ENCODE measurements at regions of chr4 and their contacts with region 1.

Region 1: DNA sequence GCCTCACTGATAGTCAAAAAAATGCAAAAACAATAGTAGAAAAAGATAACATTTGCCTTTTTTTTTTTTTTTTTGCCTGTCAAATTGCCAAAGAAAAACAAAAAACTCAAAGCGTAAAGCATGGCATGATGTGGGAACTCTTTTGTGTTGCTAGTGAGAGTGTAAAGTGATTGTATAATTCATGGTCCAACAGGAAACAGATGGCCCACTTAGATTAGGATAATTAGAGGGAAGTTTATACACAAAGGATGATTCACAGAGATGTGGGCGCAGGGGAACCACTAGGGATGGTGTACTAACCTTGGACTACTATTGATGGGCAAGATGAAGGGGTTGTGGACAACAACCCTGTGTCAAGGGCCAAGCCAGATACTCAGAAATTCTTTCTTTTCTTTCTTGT is 16.4 kb downstream of the MCUB start:
- DNase-seq: no peak
- H3K4me3 Mint-ChIP-seq: no peak overlapping the region
- H3K27ac Mint-ChIP-seq: no peak overlapping the region
- H3K4me1 Mint-ChIP-seq: peaks cover 35% of the 10 kb centered on the region
- H3K27me3 Mint-ChIP-seq: peaks cover 6% of the 10 kb centered on the region

Region 2: GRCh38 chr4:109588176-109588575 is 11.7 kb after region 1 on chr4:
- intact Hi-C with region 1: loop called (anchors 1 kb)
- DNase-seq: peak; percentile 25
- H3K4me3 Mint-ChIP-seq: peak overlapping the region; percentile 18
- H3K27ac Mint-ChIP-seq: peak overlapping the region; percentile 34
- H3K4me1 Mint-ChIP-seq: peaks cover 44% of the 10 kb centered on the region
- H3K27me3 Mint-ChIP-seq: no peaks in the 10 kb centered on the region

Region 3: GRCh38 chr4:109648266-109648996 is 72.0 kb after region 1 on chr4:
- intact Hi-C with region 1: loop called (anchors 5 kb)
- DNase-seq: no peak
- H3K4me3 Mint-ChIP-seq: peak overlapping the region; percentile 44
- H3K27ac Mint-ChIP-seq: peak overlapping the region; percentile 82
- H3K4me1 Mint-ChIP-seq: peaks cover 27% of the 10 kb centered on the region
- H3K27me3 Mint-ChIP-seq: no peaks in the 10 kb centered on the region